Ascending aorta (tissue), 2 donors: ENCODE measurements at regions of chr1 and their contacts with region 1.

Region 1: DNA sequence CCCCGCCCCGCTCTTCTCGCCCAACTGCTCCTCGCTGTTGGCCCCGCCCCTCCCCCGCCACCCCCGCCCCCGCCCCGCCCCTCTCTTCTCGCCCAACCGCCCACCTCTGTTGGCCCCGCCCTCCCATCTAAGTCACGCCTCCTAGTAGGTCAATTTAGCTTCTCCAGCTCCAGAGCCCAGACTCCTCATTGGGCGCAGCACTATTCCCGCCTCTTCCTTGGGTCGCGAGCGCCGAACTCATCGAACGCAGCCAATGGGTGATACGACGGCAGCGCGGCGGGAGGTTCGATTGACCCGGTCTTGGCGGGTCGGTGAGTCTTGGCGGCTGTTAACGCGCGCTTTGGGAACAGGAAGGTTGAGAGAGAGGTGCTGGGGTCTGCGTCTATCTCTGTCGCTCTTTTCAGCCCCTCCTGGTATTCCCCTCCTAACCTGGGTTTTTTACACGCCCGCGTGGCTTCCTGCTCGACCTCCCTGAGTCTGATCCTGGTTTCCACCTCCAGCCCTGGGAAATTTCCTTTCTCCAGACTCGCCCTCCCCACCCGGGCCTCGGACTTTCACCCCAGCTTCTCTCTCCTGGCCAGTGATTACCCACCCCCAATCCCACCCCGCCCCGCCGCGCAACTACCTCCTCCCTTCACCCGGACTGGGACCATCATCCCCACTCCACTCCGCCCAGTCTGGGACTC is at the start of gene RAD54L:
- DNase-seq: peak; percentile 92 to 99
- H3K4me3 ChIP-seq: peak within 1 kb of the TSS; percentile 75 to 80
- H3K27ac ChIP-seq: peak within 1 kb of the TSS; percentile 64 to 67
- H3K4me1 ChIP-seq: peaks cover 0 to 13% of the 10 kb centered on the region in 2 donors
- H3K27me3 ChIP-seq: no peaks in the 10 kb centered on the region
- CTCF ChIP-seq: no peak
- total RNA-seq, gene RAD54L: not detected

Region 2: DNA sequence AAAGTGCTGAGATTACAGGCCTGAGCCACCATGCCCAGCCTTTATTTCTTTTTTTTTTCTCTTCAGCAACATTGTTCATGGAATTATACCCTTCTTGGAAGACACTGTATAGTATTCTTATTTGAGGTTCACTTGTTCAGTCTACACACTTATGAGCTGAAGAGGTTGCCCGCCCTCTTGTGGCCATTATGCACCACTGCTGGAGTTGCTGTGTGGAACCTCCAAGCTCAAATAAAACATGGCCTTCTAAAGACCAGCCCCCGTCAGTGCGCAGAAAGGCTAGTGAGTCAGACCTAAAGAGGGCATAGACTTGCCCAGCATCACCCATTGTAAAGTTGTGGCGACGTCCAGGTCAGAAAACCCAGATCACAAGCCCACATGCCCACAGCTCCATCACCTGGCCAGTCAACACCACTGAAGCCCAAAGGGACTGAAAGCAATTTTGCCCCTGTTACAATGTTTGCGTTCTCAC is 24.1 kb before region 1 on chr1:
- intact Hi-C with region 1: no loop called
- DNase-seq: peak in 1 of 2 donors; percentile 87
- H3K4me3 ChIP-seq: no peak overlapping the region
- H3K27ac ChIP-seq: peak overlapping the region in 1 of 2 donors; percentile 15
- H3K4me1 ChIP-seq: peaks cover 0 to 5% of the 10 kb centered on the region in 2 donors
- H3K27me3 ChIP-seq: no peaks in the 10 kb centered on the region
- CTCF ChIP-seq: peak; percentile 79 to 93 (median 91)

Region 3: GRCh38 chr1:46508757-46509156 is 261.2 kb after region 1 on chr1:
- intact Hi-C with region 1: no loop called
- DNase-seq: no peak
- H3K4me3 ChIP-seq: no peak overlapping the region
- H3K27ac ChIP-seq: no peak overlapping the region
- H3K4me1 ChIP-seq: no peaks in the 10 kb centered on the region
- H3K27me3 ChIP-seq: no peaks in the 10 kb centered on the region
- CTCF ChIP-seq: no peak

Region 4: GRCh38 chr1:47313915-47314664 is 1066.5 kb after region 1 on chr1 and contains the start of gene STIL:
- intact Hi-C with region 1: loop called (anchors 10 kb)
- DNase-seq: peak; percentile 93 to 99
- H3K4me3 ChIP-seq: peak within 1 kb of the TSS; percentile 69 to 85
- H3K27ac ChIP-seq: peak within 1 kb of the TSS; percentile 68 to 87
- H3K4me1 ChIP-seq: peaks cover 0 to 7% of the 10 kb centered on the region in 2 donors
- H3K27me3 ChIP-seq: no peaks in the 10 kb centered on the region
- CTCF ChIP-seq: no peak
- total RNA-seq, gene STIL: 0.11 TPM